ENCODE measurements at regions of chr11 and their contacts with region 1.

Region 1: DNA sequence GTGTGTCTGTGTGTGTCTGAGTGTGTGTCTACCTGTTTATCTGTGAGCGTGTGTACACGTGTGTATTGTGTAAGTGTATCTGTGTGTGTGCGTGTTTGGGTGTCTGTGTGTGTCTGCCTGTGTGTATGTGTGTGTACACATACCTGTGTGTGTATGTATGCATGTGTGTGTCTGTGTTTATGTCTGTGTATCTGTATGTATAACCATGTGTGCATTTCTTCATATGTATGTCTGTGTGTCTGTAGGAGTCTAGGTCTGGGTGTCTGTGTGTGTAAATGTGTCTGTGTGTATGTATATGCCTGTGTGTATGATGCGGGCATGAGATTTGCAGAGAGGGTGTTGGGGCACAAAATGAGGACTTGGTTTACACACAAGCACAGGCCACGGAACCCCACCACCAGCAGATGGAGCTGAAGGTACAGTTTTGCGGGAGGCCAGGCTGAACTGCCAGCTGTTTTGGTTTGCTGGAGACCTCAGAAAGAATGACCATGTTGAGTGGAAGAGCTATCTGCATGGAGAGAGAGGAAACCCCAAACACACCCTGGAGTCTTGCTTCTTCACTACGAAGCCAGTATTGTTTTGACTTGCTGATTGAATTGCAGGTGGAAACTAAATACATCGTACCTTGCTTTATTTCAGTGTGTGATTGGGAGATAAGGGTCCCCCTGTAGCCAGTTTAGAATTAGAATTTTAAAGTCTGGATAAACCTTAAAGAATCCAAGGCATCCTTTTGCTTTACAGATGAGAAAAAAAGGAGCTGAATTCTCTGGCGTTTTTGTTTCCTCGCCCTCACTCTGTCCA is 497.2 kb downstream of the NTM start:
- DNase-seq: peak; percentile 70
- H3K4me3 ChIP-seq: no peak overlapping the region; a peak in 1 of 4 replicates
- H3K27ac ChIP-seq: no peak overlapping the region
- H3K4me1 ChIP-seq: peaks cover 0 to 11% of the 10 kb centered on the region in 2 experiments; a peak in 2 of 4 replicates
- H3K27me3 ChIP-seq: no peaks in the 10 kb centered on the region
- CTCF ChIP-seq: peak; percentile 94
- EP300 ChIP-seq: no peak
- RAD21 ChIP-seq: peak; percentile 97

Region 2: DNA sequence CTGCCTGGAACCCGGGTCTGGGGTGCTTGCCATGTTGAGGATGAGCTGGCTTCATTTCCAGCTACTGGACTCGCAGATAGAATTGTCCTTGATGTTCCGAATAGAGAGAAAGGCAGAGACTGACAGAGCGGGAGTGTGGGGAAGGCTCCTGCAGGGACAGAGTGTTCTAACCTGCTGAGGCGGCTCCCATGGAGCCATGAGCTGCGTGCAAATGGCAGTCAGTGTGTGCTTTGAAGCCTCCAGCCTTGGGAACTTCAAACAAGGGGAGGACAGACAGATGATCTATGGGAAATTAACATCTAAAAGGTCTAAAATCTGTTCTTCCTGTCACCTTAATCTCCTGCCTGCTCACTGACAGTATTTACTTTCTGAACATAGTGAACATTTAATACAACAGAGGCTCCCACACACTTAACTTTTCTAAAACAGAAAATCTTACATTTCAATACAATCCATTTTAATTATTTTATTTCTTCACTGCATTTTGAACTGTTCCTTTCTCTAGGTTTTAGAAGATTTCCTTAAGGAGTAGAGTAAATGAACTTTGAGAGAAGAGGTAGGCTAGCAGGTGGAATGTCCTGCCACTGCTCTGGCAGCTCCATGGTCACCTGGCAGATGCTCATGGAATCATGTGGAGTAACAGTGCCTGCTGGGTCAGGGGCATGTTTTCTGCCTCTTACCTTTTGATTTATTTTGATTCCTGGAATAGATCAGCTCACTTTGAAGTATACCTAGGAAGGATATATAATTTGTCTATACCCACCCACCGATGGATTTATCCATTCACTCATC is 15.5 kb before region 1 on chr11:
- CTCF ChIA-PET with region 1: interaction called, 15 read pairs
- POLR2A ChIA-PET with region 1: no interaction called
- DNase-seq: no peak
- H3K4me3 ChIP-seq: no peak overlapping the region
- H3K27ac ChIP-seq: no peak overlapping the region
- H3K4me1 ChIP-seq: no peaks in the 10 kb centered on the region
- H3K27me3 ChIP-seq: no peaks in the 10 kb centered on the region; the same call in 1 of the 2 replicates
- CTCF ChIP-seq: no peak
- EP300 ChIP-seq: no peak
- RAD21 ChIP-seq: no peak

Region 3: GRCh38 chr11:131910523-131911387 is 43.1 kb after region 1 on chr11:
- CTCF ChIA-PET with region 1: interaction called, 46 read pairs
- POLR2A ChIA-PET with region 1: no interaction called
- DNase-seq: peak; percentile 73
- H3K4me3 ChIP-seq: peak overlapping the region; percentile 60 to 95
- H3K27ac ChIP-seq: peak overlapping the region in 1 of 2 experiments; percentile 80; a peak in 2 of 4 replicates
- H3K4me1 ChIP-seq: peaks cover 3 to 42% of the 10 kb centered on the region in 2 experiments; a peak in 2 of 4 replicates
- H3K27me3 ChIP-seq: no peaks in the 10 kb centered on the region
- CTCF ChIP-seq: no peak
- EP300 ChIP-seq: no peak
- RAD21 ChIP-seq: no peak

Region 4: GRCh38 chr11:132028380-132029240 is 161.0 kb after region 1 on chr11:
- CTCF ChIA-PET with region 1: interaction called, 79 read pairs
- POLR2A ChIA-PET with region 1: no interaction called
- DNase-seq: peak; percentile 46
- H3K4me3 ChIP-seq: no peak overlapping the region
- H3K27ac ChIP-seq: 0 out of 4 replicates have a peak overlapping the region, but pooled peaks of 1 of the 2 experiments have one; percentile 33
- H3K4me1 ChIP-seq: peaks cover 0 to 62% of the 10 kb centered on the region in 2 experiments; a peak in 2 of 4 replicates
- H3K27me3 ChIP-seq: no peaks in the 10 kb centered on the region
- CTCF ChIP-seq: peak; percentile 68
- EP300 ChIP-seq: no peak
- RAD21 ChIP-seq: peak; percentile 80

Region 5: GRCh38 chr11:132402071-132402684 is 534.5 kb after region 1 on chr11:
- CTCF ChIA-PET with region 1: interaction called, 16 read pairs
- POLR2A ChIA-PET with region 1: no interaction called
- DNase-seq: peak; percentile 69
- H3K4me3 ChIP-seq: no peak overlapping the region
- H3K27ac ChIP-seq: no peak overlapping the region
- H3K4me1 ChIP-seq: no peaks in the 10 kb centered on the region; a peak in 1 of 4 replicates
- H3K27me3 ChIP-seq: no peaks in the 10 kb centered on the region
- CTCF ChIP-seq: peak; percentile 52
- EP300 ChIP-seq: no peak
- RAD21 ChIP-seq: peak; percentile 79

Measured in SK-N-SH (cell line).